Astrocyte of the spinal cord (primary cell): ENCODE measurements at regions of chr21 and their contacts with region 1.

Region 1: GRCh38 chr21:26170471-26171257 is at the start of gene APP:
- DNase-seq: peak; percentile 75
- H3K4me3 ChIP-seq: peak within 1 kb of the TSS; percentile 61
- CTCF ChIP-seq: peak; percentile 71

Region 2: DNA sequence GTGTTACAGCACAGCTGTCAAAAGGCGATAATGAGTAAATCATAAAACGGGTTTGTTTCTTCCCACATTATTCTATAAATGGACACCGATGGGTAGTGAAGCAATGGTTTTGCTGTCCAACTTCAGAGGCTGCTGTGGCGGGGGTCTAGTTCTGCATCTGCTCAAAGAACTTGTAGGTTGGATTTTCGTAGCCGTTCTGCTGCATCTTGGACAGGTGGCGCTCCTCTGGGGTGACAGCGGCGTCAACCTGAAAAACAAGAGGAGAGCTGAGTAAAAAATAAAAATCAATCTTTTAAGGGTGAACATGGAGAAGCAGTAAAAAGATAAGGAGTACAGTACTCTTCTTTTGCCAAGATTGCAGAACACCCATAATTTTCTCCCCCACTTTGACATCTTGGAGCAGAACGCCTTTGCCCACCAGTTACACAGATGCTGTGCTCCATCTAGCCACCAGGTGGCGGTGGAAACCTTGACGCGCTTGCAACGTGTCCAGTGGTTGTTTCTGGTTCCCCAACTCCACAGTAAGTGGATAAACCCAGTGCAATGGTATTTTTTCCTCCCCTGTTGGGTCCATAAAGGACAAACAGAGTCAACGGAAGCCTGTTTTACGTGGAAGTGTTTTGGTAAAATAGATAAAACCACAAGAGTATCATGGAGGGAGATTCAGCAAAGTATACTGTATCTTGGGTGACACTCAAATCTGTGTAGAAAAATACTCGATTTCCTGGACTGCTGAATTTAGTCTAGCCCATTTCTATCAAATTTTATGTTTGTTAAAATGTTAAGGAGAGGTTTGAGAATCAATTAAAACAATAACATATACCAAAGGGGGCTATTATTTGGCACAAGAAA is 288.9 kb before region 1 on chr21:
- in situ Hi-C with region 1: loop called (anchors 25 kb)
- DNase-seq: peak; percentile 67
- H3K4me3 ChIP-seq: no peak overlapping the region
- CTCF ChIP-seq: peak; percentile 96